ENCODE measurements at regions of chr2 and their contacts with region 1.

Region 1: GRCh38 chr2:233165895-233166661 is 85.4 kb upstream of the ATG16L1 start:
- DNase-seq: peak; percentile 97 to 99
- H3K4me3 ChIP-seq: no peak overlapping the region
- H3K27ac ChIP-seq: peak overlapping the region; percentile 76
- H3K4me1 ChIP-seq: peaks cover 53% of the 10 kb centered on the region
- H3K27me3 ChIP-seq: no peaks in the 10 kb centered on the region
- CTCF ChIP-seq: no peak

Region 2: GRCh38 chr2:232890896-232891601 is 275.0 kb before region 1 on chr2:
- CTCF ChIA-PET with region 1: no interaction called
- POLR2A ChIA-PET with region 1: no interaction called
- intact Hi-C with region 1: loop called (anchors 1 kb)
- DNase-seq: peak; percentile 62 to 99
- H3K4me3 ChIP-seq: no peak overlapping the region
- H3K27ac ChIP-seq: no peak overlapping the region
- H3K4me1 ChIP-seq: peaks cover 3% of the 10 kb centered on the region
- H3K27me3 ChIP-seq: no peaks in the 10 kb centered on the region
- CTCF ChIP-seq: no peak

Region 3: DNA sequence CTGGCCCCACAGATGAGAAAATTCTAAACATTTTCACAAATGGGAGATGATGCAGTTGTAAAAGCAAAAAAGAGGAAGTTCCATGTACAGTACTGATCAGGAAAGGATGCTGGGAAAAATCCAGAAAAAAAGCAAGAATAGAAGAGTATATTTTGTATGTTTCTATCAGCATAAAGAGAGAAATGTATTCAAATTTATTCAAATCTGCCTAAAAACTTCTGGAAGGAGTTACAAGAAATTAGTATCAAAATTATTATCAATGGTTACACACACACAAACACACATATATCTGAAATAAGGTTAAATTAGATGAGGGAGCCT is 177.4 kb before region 1 on chr2:
- CTCF ChIA-PET with region 1: no interaction called
- POLR2A ChIA-PET with region 1: interaction called, 8 read pairs
- intact Hi-C with region 1: loop called (anchors 1 kb)
- DNase-seq: no peak
- H3K4me3 ChIP-seq: 0 out of 2 replicates have a peak overlapping the region, but pooled peaks have one; percentile 19
- H3K27ac ChIP-seq: peak overlapping the region; percentile 95
- H3K4me1 ChIP-seq: peaks cover 50% of the 10 kb centered on the region
- H3K27me3 ChIP-seq: no peaks in the 10 kb centered on the region
- CTCF ChIP-seq: no peak

Region 4: GRCh38 chr2:233033672-233034071 is 132.4 kb before region 1 on chr2:
- CTCF ChIA-PET with region 1: no interaction called
- POLR2A ChIA-PET with region 1: no interaction called
- intact Hi-C with region 1: no loop called
- DNase-seq: peak; percentile 45 to 78
- H3K4me3 ChIP-seq: no peak overlapping the region
- H3K27ac ChIP-seq: peak overlapping the region; percentile 86
- H3K4me1 ChIP-seq: peaks cover 51% of the 10 kb centered on the region
- H3K27me3 ChIP-seq: no peaks in the 10 kb centered on the region
- CTCF ChIP-seq: no peak

Region 5: GRCh38 chr2:233210843-233211547 is 44.9 kb after region 1 on chr2:
- CTCF ChIA-PET with region 1: no interaction called
- POLR2A ChIA-PET with region 1: no interaction called
- intact Hi-C with region 1: loop called (anchors 1 kb)
- DNase-seq: peak; percentile 92 to 97
- H3K4me3 ChIP-seq: no peak overlapping the region
- H3K27ac ChIP-seq: peak overlapping the region; percentile 28; the same call in 1 of the 2 replicates
- H3K4me1 ChIP-seq: peaks cover 57% of the 10 kb centered on the region
- H3K27me3 ChIP-seq: no peaks in the 10 kb centered on the region
- CTCF ChIP-seq: no peak

Region 6: GRCh38 chr2:233234264-233234663 is 68.2 kb after region 1 on chr2:
- CTCF ChIA-PET with region 1: no interaction called
- POLR2A ChIA-PET with region 1: interaction called, 19 read pairs
- intact Hi-C with region 1: no loop called
- DNase-seq: no peak
- H3K4me3 ChIP-seq: no peak overlapping the region
- H3K27ac ChIP-seq: no peak overlapping the region
- H3K4me1 ChIP-seq: no peaks in the 10 kb centered on the region
- H3K27me3 ChIP-seq: no peaks in the 10 kb centered on the region
- CTCF ChIP-seq: no peak

Measured in PC-9 (cell line).